PC-9 (cell line): ENCODE measurements at regions of chr2 and their contacts with region 1.

Region 1: GRCh38 chr2:231674587-231675338 is 33.6 kb upstream of the PTMA start:
- DNase-seq: peak; percentile 48 to 66
- H3K4me3 ChIP-seq: no peak overlapping the region
- H3K27ac ChIP-seq: peak overlapping the region; percentile 34; the same call in 1 of the 2 replicates
- H3K4me1 ChIP-seq: peaks cover 49% of the 10 kb centered on the region
- H3K27me3 ChIP-seq: no peaks in the 10 kb centered on the region
- CTCF ChIP-seq: peak; percentile 86

Region 2: GRCh38 chr2:231372326-231372725 is 302.4 kb before region 1 on chr2:
- CTCF ChIA-PET with region 1: no interaction called
- POLR2A ChIA-PET with region 1: interaction called, 16 read pairs
- intact Hi-C with region 1: no loop called
- DNase-seq: no peak
- H3K4me3 ChIP-seq: no peak overlapping the region
- H3K27ac ChIP-seq: no peak overlapping the region
- H3K4me1 ChIP-seq: peaks cover 55% of the 10 kb centered on the region
- H3K27me3 ChIP-seq: no peaks in the 10 kb centered on the region
- CTCF ChIP-seq: no peak

Region 3: GRCh38 chr2:231545105-231545902 is 129.5 kb before region 1 on chr2:
- CTCF ChIA-PET with region 1: interaction called, 11 read pairs
- POLR2A ChIA-PET with region 1: no interaction called
- intact Hi-C with region 1: no loop called
- DNase-seq: peak; percentile 10 to 58
- H3K4me3 ChIP-seq: no peak overlapping the region
- H3K27ac ChIP-seq: no peak overlapping the region
- H3K4me1 ChIP-seq: peaks cover 12% of the 10 kb centered on the region
- H3K27me3 ChIP-seq: peaks cover 8% of the 10 kb centered on the region; the same call in 1 of the 2 replicates
- CTCF ChIP-seq: no peak

Region 4: DNA sequence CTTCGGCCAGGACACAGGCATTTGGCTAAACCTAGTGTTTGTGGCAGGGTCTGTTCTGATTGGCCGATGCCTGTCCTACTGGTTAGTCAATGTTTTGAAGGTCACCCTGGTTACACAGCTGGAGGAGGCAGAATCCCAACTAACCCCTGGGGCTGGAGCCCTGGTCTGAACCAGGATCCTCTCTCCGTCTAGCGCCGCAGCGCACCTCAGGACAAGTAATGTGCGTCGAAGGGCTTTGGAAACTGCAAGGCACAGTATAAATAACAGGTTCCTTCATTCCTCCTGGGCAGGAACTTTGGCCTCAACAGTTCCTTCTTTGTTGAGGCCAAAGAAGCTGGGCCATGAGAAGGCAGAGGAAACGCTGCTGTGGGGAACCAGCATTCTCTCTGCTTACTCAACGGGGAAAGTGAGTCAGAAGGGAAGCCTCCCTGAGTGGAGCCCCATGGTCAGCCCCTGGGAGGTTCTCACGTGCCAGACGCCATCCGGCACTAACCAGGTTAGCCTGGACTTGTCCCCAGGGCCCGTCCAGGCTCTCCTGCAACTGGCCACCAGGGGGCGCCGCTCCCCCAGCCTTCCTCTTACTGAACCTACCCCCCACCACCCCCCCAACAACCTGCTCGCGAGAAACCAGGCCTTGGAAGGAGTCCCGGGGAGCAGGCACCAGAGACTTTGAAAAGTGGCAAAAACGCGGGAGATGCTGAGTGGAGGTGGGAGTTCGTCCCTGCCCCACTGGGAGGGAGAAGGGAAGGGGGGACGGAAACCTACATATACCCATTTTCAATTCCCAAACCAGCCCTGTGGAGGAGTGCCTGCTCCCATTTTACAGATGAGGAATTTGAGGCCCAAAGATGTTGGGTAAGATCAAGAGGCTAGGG is 62.3 kb before region 1 on chr2:
- CTCF ChIA-PET with region 1: interaction called, 18 read pairs
- POLR2A ChIA-PET with region 1: interaction called, 22 read pairs
- intact Hi-C with region 1: loop called (anchors 1 kb)
- DNase-seq: peak; percentile 76 to 90
- H3K4me3 ChIP-seq: peak overlapping the region; percentile 29; the same call in 1 of the 2 replicates
- H3K27ac ChIP-seq: peak overlapping the region; percentile 98
- H3K4me1 ChIP-seq: peaks cover 45% of the 10 kb centered on the region
- H3K27me3 ChIP-seq: no peaks in the 10 kb centered on the region
- CTCF ChIP-seq: peak; percentile 97

Region 5: DNA sequence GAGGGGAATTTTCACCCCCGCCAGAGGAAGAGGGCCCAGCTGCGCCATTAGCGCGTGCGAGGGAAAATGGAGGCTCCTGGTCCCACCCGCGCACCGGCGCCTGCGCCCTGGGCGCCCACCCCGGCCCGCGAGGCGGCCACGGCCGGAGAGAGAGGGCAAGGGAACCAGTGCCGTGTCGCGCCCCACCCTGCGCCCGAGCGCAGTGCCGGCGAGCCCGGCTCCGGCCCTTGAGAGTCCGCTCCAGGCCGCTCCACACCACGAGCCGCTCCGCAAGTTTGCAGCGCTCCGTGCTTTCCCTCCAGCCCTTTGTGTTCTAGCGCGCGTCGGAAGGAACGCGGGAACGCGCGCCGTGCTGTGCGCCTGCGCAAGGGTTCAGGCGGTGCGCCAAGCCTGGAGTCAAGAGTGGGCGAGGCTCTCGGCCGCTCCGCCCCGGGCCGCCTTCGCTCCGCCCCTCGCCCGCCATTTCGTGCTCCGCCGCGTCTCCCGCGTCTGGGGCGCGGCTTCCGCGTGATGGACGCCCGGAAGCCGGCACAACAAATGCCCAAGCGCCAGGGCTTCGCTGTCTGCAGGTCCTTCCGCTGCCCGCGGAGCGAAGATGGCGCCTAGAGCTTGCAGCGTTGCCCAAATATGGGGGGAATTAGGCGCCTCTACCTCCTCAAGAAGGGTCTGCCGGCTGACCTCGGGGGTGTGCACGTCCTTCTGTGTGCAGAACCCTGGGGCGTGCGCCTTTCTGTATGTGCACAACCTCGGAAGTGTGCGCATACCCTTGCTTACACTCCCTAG is 12.5 kb before region 1 on chr2:
- CTCF ChIA-PET with region 1: interaction called, 4 read pairs
- POLR2A ChIA-PET with region 1: interaction called, 6 read pairs
- intact Hi-C with region 1: loop called (anchors 1 kb)
- DNase-seq: peak; percentile 88 to 98
- H3K4me3 ChIP-seq: peak overlapping the region; percentile 56
- H3K27ac ChIP-seq: peak overlapping the region; percentile 64
- H3K4me1 ChIP-seq: peaks cover 39% of the 10 kb centered on the region
- H3K27me3 ChIP-seq: no peaks in the 10 kb centered on the region
- CTCF ChIP-seq: no peak

Region 6: DNA sequence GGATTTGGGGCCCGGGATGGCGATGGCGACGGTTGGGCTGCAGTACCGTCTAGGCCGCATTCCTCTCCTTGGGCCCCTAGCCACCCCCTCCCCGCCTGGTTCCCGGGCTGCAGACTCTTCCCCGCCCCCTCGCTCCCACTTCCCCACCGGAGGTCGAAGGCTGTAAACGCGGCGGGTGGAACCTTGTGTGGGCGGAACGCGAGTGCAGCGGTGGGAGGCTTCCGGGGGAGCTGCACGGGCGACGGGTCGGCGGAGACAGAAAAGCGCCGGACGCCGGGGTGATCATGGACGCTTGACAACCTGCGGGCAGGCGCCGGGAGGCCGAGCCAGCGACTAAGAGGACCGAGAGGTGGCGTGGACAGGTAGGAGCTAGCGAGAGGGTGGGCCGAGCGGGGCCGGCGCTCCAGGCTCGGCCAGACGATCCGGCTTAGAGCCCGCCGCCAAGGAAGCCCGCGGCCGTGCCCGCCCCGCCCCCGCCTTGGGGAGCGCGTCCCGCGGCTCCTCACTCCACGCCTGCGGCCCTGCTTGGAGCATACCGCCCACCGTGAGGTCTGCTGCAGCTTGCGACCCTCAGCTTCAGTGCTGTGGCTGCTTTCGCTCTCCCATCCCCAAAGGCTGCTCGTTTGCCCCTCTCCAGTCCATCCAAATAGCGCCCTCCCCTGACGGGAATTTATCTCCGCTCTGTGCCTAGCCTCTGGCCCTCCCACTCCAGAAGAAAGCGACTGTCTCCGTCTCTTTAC is 111.6 kb after region 1 on chr2 and contains the start of gene COPS7B:
- CTCF ChIA-PET with region 1: no interaction called
- POLR2A ChIA-PET with region 1: interaction called, 3 read pairs
- intact Hi-C with region 1: loop called (anchors 2 kb)
- DNase-seq: peak; percentile 63 to 73
- H3K4me3 ChIP-seq: peak within 1 kb of the TSS; percentile 97
- H3K27ac ChIP-seq: 0 out of 2 replicates have a peak within 1 kb of the TSS, but pooled peaks have one; percentile 18
- H3K4me1 ChIP-seq: peaks cover 18% of the 10 kb centered on the region
- H3K27me3 ChIP-seq: no peaks in the 10 kb centered on the region
- CTCF ChIP-seq: peak; percentile 71
- total RNA-seq, gene COPS7B: 46.3 and 52.9 TPM in 2 replicates